K562 (cell line): ENCODE measurements at regions of chr2 and their contacts with region 1.

Region 1: DNA sequence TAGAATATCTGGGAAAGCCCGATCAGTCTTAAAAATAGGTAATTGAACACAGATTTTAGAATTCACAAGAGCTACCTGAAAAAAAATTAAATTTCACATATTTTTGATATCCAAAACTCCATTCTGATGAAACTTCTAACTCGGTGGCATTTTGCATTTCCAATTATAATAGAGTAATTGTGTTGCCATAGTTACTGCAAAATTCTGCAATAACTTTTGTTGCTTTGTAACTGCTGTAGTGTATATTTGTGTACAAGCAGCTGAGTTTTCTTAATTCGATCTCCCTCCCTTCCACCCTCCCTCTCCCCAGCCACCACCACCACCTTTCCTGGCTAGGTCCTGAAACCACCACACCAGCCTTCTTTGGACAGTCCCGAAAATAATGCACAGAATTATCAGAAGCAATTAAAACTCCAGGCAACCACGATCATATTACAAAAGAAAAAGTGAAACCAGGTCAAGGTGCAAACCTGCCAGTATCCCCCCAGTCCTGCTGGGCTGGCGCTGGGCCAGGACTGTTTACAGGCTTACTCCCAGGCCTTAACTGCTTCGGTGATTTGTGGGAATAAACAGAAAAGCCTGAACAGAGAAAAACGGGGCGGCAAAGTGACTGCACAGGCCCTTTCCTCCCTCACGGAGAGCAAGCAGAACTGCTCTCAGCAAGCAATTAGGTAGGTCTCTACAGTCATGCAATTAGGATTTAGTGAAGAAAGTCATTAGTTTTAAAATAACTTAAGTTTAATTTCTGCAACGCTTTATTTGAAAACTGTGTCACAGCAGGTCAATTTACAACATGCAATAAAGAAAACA is 1.5 kb downstream of the HDAC4 start:
- DNase-seq: peak in 2 of 4 experiments; percentile 10 to 51
- ATAC-seq: no peak
- H3K4me3 ChIP-seq: peak overlapping the region; percentile 53
- H3K27ac ChIP-seq: no peak overlapping the region
- H3K4me1 ChIP-seq: peaks cover 3 to 15% of the 10 kb centered on the region in 2 experiments; a peak in 4 of 5 replicates
- H3K27me3 ChIP-seq: no peaks in the 10 kb centered on the region
- CTCF ChIP-seq: no peak
- EP300 ChIP-seq: no peak
- POLR2A ChIP-seq: no peak
- RAD21 ChIP-seq: no peak

Region 2: DNA sequence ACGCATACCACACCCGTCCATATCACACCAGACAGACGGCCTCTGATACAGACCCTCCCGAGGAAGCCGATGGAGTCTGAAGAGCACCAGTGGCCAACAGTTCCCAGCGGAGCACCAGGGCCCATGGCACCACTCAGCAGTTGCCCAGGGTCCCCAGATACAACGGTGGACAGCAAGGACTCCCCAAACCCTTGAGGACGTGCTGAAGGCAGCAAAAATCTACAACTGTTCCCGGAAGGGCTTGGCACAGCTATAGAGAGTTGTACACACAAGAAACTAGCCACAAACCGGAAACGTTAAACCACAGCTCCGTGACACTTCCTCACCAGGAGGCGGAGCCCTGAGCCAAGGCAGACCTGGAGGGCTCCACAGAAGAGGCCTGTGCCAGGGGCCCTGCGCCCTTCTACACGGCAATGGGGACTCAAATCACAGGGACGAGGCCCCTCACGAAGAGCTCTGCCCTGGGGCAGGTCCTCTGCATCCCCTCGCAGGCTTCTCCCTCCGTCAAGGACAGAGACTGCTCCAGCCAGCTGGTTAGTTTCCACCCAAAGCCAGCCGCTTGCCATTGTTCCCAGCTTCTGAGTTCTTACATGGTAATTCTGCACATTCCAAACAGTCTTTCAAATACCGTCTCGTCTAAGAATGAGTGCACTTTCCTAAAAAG is 131.9 kb before region 1 on chr2:
- CTCF ChIA-PET with region 1: interaction called, 3 read pairs
- POLR2A ChIA-PET with region 1: no interaction called
- in situ Hi-C with region 1: no loop called
- intact Hi-C with region 1: loop called (anchors 5 kb)
- DNase-seq: peak; percentile 40 to 77 (median 56)
- ATAC-seq: peak; percentile 92
- H3K4me3 ChIP-seq: no peak overlapping the region
- H3K27ac ChIP-seq: peak overlapping the region; percentile 77; the same call in 2 of the 3 replicates
- H3K4me1 ChIP-seq: peaks cover 22 to 45% of the 10 kb centered on the region in 2 experiments; a peak in 4 of 5 replicates
- H3K27me3 ChIP-seq: no peaks in the 10 kb centered on the region
- CTCF ChIP-seq: peak; percentile 65 to 75 (median 71)
- EP300 ChIP-seq: 0 out of 2 replicates have a peak, but pooled peaks have one; percentile 20
- POLR2A ChIP-seq: no peak
- RAD21 ChIP-seq: peak; percentile 65 to 85

Region 3: GRCh38 chr2:239326831-239327535 is 72.3 kb before region 1 on chr2:
- CTCF ChIA-PET with region 1: no interaction called
- POLR2A ChIA-PET with region 1: no interaction called
- in situ Hi-C with region 1: no loop called
- intact Hi-C with region 1: loop called (anchors 10 kb)
- DNase-seq: no peak
- ATAC-seq: no peak
- H3K4me3 ChIP-seq: no peak overlapping the region
- H3K27ac ChIP-seq: no peak overlapping the region
- H3K4me1 ChIP-seq: peaks cover 8 to 56% of the 10 kb centered on the region in 2 experiments; a peak in 4 of 5 replicates
- H3K27me3 ChIP-seq: no peaks in the 10 kb centered on the region
- CTCF ChIP-seq: no peak
- EP300 ChIP-seq: no peak
- POLR2A ChIP-seq: no peak
- RAD21 ChIP-seq: no peak